ENCODE measurements at regions of chr3 and their contacts with region 1.

Region 1: DNA sequence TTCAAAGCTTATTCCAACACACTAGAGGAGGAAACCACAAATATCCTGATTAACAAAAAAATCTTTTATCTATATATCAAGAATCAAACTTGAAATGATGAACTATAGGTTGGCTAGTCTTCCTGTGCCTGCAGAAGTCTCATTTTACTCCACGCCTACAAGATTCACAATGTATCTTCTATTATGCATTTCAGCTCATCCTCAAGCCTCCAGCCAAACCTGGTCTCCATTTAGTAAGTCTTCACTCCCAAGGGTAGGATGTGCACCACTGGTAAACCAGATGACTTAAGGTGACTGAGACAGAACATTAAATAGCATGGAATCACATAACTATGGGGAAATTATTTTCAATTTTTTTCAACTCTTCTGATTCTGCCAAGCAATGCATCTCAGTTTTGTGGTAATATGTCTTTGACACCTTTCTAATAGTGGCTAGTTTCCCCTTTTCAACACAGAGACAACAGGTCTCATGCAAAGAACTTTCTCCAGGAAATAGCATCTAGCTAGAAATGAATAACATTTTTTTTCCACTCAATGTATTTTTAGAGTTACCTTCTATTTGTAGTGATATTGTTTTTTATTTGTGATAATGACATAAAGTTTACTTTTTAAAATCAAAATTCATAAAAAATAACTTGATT is 166.9 kb downstream of the TNIK start:
- DNase-seq: no peak
- H3K4me3 ChIP-seq: no peak overlapping the region
- H3K27ac ChIP-seq: no peak overlapping the region
- H3K4me1 ChIP-seq: peaks cover 29% of the 10 kb centered on the region
- H3K27me3 ChIP-seq: no peaks in the 10 kb centered on the region
- CTCF ChIP-seq: no peak
- POLR2A ChIP-seq: no peak

Region 2: DNA sequence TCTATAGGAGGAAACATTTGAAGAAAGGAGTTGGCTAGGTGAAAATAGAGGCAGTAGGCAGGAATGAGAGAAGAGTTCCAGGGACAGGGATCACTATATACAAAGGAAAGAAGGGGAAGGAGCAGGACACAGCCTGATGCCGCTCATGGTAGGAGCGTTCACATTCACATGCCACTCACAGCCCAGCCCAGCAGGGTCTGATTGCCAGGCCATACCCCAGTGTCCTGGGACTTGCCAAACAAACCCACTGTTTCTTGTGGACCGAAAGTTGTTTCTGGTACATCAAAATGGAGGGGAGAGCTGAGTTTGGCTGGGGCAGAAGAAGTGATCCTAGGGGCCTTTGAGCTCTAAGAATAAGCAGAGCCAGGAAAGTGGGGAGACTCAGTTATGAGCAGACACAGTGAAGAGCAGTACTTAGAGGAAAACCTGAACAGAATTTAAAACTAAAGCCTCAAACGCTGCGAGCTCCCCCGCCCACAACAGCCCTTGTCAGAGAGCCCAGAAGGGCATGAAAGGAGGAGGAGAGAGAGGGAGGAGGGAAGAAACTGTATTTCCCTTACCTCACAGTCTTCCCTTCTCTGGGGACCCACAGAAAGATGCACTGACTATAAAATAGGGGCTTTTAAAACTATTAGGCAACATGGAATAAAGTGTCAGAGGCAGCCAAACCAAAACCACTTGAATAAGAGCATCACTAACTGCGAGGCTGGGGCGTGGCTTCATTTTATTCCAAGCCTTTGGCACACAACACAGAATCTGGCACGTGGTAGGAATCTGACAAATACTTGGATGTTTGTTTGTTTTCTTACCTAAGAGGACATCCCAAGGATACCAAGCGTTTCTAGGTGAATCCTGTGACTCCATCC is 552.3 kb before region 1 on chr3:
- CTCF ChIA-PET with region 1: no interaction called
- POLR2A ChIA-PET with region 1: no interaction called
- dilution Hi-C with region 1: no loop called
- intact Hi-C with region 1: no loop called
- DNase-seq: no peak
- H3K4me3 ChIP-seq: no peak overlapping the region
- H3K27ac ChIP-seq: peak overlapping the region; percentile 34
- H3K4me1 ChIP-seq: peaks cover 34% of the 10 kb centered on the region
- H3K27me3 ChIP-seq: no peaks in the 10 kb centered on the region
- CTCF ChIP-seq: no peak
- POLR2A ChIP-seq: no peak

Region 3: DNA sequence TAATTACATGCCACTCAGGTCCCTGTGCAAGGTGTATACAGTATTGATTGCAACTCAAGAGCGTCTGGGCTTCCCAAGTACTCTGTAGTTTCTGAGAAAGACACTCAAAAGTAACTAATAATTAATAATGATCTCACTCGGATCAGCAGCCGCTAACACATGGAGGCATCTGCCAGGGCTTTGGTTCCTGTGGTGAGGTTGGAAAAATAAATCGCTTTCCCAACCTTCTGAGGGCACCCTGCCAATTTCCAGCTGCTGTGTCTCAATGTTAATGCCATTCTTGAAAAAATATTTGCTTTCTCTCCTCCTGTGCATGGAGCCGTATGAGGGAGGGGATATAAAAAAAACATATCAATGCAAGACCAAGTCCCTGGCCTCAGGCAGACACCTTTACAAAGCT is 150.3 kb before region 1 on chr3:
- CTCF ChIA-PET with region 1: no interaction called
- POLR2A ChIA-PET with region 1: no interaction called
- dilution Hi-C with region 1: no loop called
- intact Hi-C with region 1: no loop called
- DNase-seq: peak; percentile 35
- H3K4me3 ChIP-seq: no peak overlapping the region
- H3K27ac ChIP-seq: no peak overlapping the region
- H3K4me1 ChIP-seq: no peaks in the 10 kb centered on the region
- H3K27me3 ChIP-seq: no peaks in the 10 kb centered on the region
- CTCF ChIP-seq: no peak
- POLR2A ChIP-seq: no peak

Region 4: DNA sequence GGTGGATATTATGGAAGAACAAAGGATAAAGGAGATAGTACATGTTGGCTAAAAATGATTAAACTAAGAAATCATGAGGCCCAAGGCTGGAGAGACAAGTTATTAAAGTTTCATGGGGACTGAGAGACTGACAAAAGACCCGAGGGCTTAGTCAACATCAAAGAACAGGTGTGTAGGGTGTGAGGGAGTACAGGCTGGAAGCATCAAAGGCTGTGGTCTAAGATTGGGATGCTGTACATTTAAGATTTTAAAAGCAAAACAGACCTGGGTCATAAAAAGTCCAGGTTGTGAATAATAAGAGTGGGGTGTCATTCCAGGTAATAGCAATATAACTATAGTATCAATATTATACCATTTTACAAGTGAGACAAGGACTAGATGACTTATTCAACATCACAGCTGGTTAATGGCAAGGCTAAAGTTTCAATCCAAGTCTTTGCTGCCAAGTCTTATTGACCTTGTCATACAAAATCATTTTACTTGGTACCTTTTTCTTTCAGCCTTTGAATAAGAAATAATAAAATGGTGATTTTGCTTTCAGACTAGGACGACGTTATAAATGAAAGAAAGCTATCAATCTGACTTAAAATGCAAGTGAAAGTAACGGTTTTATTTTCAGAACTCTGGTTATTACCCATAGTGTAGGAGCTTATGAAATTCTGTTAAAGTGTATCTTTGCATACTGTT is 44.7 kb before region 1 on chr3:
- CTCF ChIA-PET with region 1: no interaction called
- POLR2A ChIA-PET with region 1: no interaction called
- dilution Hi-C with region 1: no loop called
- intact Hi-C with region 1: no loop called
- DNase-seq: no peak
- H3K4me3 ChIP-seq: no peak overlapping the region
- H3K27ac ChIP-seq: no peak overlapping the region
- H3K4me1 ChIP-seq: no peaks in the 10 kb centered on the region
- H3K27me3 ChIP-seq: no peaks in the 10 kb centered on the region
- CTCF ChIP-seq: no peak
- POLR2A ChIP-seq: no peak

Region 5: GRCh38 chr3:171309906-171310359 is 16.7 kb after region 1 on chr3:
- CTCF ChIA-PET with region 1: interaction called, 33 read pairs
- POLR2A ChIA-PET with region 1: no interaction called
- dilution Hi-C with region 1: no loop called
- intact Hi-C with region 1: no loop called
- DNase-seq: peak; percentile 76
- H3K4me3 ChIP-seq: no peak overlapping the region
- H3K27ac ChIP-seq: peak overlapping the region; percentile 19
- H3K4me1 ChIP-seq: peaks cover 28% of the 10 kb centered on the region
- H3K27me3 ChIP-seq: no peaks in the 10 kb centered on the region
- CTCF ChIP-seq: no peak
- POLR2A ChIP-seq: no peak